Transverse colon (tissue), 4 donors: ENCODE measurements at regions of chr11 and their contacts with region 1.

Region 1: GRCh38 chr11:10599388-10600175 is 31.1 kb upstream of the LYVE1 start:
- DNase-seq: no peak
- H3K4me3 ChIP-seq: no peak overlapping the region
- H3K27ac ChIP-seq: peak overlapping the region; percentile 38 to 84 (median 80)
- H3K4me1 ChIP-seq: peaks cover 0 to 33% (median 11%) of the 10 kb centered on the region in 4 donors
- H3K27me3 ChIP-seq: no peaks in the 10 kb centered on the region
- CTCF ChIP-seq: no peak
- EP300 ChIP-seq: no peak
- POLR2A ChIP-seq: no peak

Region 2: DNA sequence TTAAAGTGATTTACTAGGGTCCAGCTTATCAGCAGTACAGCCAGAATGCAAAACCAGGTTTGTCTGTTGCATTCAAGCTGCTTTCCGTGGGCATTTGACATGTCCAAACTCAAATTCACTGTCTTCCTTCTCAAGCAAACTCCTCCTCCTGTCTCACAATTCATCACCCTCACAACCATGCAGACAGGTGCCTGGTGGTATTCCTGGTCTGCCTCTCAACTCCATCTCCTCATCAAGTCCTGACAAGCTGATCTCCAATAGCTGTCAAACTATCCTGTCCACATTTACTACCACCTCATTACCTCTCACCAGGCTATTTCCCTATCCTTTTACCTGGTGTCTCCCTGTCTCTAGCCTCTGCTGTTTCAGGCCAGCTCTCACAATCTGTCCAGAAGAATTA is 18.0 kb after region 1 on chr11:
- in situ Hi-C with region 1: no loop called
- intact Hi-C with region 1: loop called (anchors 1 kb)
- DNase-seq: no peak
- H3K4me3 ChIP-seq: no peak overlapping the region
- H3K27ac ChIP-seq: peak overlapping the region; percentile 57 to 68 (median 64)
- H3K4me1 ChIP-seq: peaks cover 0 to 16% (median 4%) of the 10 kb centered on the region in 4 donors
- H3K27me3 ChIP-seq: no peaks in the 10 kb centered on the region
- CTCF ChIP-seq: no peak
- EP300 ChIP-seq: no peak
- POLR2A ChIP-seq: no peak